ENCODE measurements at regions of chr14 and their contacts with region 1.

Region 1: DNA sequence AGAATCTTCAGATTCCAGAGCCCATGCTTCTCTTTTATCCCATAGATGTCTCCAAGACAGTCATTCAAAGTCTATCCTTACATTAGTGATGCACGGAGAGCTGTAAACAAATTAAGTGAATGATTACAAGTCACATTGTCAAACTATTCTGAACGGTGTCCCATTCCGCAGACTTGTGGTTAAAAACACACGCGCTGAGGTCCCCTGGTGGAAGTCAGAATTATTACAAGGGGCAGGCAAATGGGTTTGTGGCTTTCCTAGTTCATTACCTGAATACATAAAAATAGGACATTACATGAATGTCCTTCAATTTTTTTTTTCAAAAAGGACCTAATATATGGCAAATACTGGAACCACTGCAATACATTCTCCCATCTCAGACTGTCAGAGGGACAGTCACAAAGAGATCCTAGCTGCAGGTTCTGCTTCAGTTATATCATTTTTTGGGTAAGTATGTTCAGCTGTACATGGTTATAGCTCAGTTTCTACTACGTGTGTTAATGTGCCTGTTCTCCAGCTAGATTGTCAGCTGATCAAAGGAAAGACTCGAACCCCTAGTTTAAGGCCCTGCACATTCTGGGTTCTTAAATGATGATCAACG is 53.1 kb upstream of the STON2 start:
- DNase-seq: peak in 2 of 3 donors; percentile 39 to 60
- ATAC-seq: peak; percentile 87 to 92 (median 90)
- H3K4me3 ChIP-seq: no peak overlapping the region
- H3K27ac ChIP-seq: no peak overlapping the region
- H3K4me1 ChIP-seq: peaks cover 0 to 6% (median 0%) of the 10 kb centered on the region in 4 donors
- H3K27me3 ChIP-seq: no peaks in the 10 kb centered on the region
- CTCF ChIP-seq: peak; percentile 85 to 94 (median 88)
- POLR2A ChIP-seq: no peak

Region 2: GRCh38 chr14:81269100-81269978 is 183.9 kb before region 1 on chr14:
- intact Hi-C with region 1: loop called (anchors 5 kb)
- DNase-seq: no peak
- ATAC-seq: peak; percentile 97 to 98 (median 98)
- H3K4me3 ChIP-seq: peak overlapping the region in 1 of 3 donors; percentile 25
- H3K27ac ChIP-seq: peak overlapping the region in 2 of 3 donors; percentile 51 to 56
- H3K4me1 ChIP-seq: peaks cover 0 to 6% (median 1%) of the 10 kb centered on the region in 4 donors
- H3K27me3 ChIP-seq: no peaks in the 10 kb centered on the region
- CTCF ChIP-seq: peak; percentile 81 to 97 (median 82)
- POLR2A ChIP-seq: no peak

Measured in right lobe of liver (tissue), 6 donors.